Tibial artery (tissue), 4 donors: ENCODE measurements at regions of chr3 and their contacts with region 1.

Region 1: GRCh38 chr3:52892625-52893311 is 4.6 kb downstream of the STIMATE start:
- DNase-seq: no peak
- H3K4me3 ChIP-seq: peak overlapping the region; percentile 31 to 34
- H3K27ac ChIP-seq: peak overlapping the region; percentile 85 to 89
- H3K4me1 ChIP-seq: peaks cover 0 to 82% (median 69%) of the 10 kb centered on the region in 4 donors
- H3K27me3 ChIP-seq: no peaks in the 10 kb centered on the region
- CTCF ChIP-seq: peak; percentile 3 to 22

Region 2: DNA sequence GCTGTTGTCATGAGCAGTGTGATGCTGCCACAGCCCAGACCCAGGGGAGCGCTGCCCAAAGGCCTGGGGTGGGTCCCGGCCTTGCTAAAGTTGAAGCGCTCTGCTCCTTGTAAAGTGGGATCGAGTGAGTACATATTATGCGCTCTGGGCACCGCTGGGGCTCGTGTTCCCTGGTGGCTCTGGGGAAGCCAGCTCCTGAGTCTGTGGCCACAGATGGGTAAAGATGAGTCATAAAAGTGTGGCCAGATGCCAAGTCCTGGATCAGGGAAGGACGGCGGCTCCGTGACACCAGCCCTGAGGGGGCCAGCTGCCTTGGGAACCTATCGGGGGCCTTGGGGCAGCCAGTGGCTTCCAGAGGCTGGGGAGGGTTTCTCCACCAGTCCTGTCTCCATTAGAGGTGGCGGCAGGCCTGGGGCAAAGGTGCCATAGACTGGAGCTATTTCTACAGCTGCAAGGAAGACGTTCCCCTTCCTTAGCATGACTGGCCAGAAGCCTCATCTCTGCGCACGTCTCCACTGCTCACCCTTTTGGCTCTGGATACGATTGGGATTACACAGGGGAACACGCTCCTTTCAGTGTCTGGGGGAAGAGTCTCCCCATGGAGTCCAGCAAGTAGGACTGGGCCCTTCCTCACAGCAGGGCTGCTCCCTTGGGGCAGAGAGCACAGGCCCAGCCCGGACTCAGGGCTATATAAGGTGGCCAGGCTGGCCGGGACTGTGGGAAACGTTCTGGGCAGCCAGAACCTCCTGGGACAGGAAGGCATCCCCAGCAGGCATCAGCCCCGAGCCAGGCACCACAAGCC is 61.1 kb before region 1 on chr3:
- intact Hi-C with region 1: loop called (anchors 2 kb)
- DNase-seq: peak; percentile 85 to 96
- H3K4me3 ChIP-seq: peak overlapping the region; percentile 58
- H3K27ac ChIP-seq: peak overlapping the region; percentile 90 to 92
- H3K4me1 ChIP-seq: peaks cover 0 to 91% (median 65%) of the 10 kb centered on the region in 4 donors
- H3K27me3 ChIP-seq: no peaks in the 10 kb centered on the region
- CTCF ChIP-seq: no peak